Endothelial cell of umbilical vein (primary cell): ENCODE measurements at regions of chr13 and their contacts with region 1.

Region 1: DNA sequence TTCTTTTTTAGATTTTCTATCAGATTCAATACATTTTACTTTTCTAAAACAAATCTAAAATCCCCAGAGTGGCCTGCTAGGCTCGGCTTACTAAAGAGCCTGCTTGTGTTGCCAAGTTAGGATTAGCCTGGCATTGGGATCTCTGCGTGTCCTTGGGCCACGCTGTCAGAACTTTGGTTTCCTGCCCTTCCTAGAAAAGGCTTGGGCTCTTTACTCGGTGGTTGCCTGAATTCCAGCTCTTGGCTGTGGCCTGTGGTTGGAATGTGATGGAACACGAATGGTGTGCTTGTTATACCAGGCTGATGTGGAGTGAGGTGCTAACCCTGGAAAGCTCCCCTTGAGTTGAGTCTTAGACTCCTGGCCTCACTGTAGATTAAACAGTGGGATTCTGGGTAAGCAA is 8.5 kb downstream of the SPATA13 start:
- DNase-seq: no peak
- H3K4me3 ChIP-seq: no peak overlapping the region
- H3K27ac ChIP-seq: no peak overlapping the region
- H3K4me1 ChIP-seq: peaks cover 7% of the 10 kb centered on the region
- H3K27me3 ChIP-seq: no peaks in the 10 kb centered on the region
- CTCF ChIP-seq: no peak
- POLR2A ChIP-seq: no peak

Region 2: DNA sequence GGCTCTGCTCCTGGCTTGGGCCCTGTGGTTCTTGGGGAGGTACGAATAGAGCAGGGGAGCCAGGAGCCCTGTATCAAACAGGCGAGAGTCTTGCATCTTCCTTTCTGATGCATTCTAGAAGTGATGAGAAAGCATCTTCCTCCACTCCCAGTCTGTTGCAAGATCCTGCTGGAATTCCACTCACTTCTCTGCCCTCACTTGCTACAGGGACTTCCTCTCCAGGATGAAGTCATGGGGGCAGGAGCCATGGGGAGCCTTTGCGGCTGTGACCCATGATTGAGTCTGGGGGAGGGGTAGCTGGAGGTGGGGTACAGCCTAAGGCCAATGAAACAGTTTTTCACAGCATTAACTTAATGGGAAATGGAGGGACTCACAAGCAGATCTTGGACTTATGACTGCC is 43.0 kb before region 1 on chr13:
- CTCF ChIA-PET with region 1: no interaction called
- POLR2A ChIA-PET with region 1: no interaction called
- dilution Hi-C with region 1: no loop called
- intact Hi-C with region 1: loop called (anchors 1 kb)
- DNase-seq: no peak
- H3K4me3 ChIP-seq: no peak overlapping the region
- H3K27ac ChIP-seq: no peak overlapping the region
- H3K4me1 ChIP-seq: peaks cover 14% of the 10 kb centered on the region
- H3K27me3 ChIP-seq: peaks cover 0 to 11% of the 10 kb centered on the region in 2 experiments
- CTCF ChIP-seq: no peak
- POLR2A ChIP-seq: no peak

Region 3: GRCh38 chr13:24153979-24154701 is 14.8 kb before region 1 on chr13:
- CTCF ChIA-PET with region 1: no interaction called
- POLR2A ChIA-PET with region 1: no interaction called
- dilution Hi-C with region 1: no loop called
- intact Hi-C with region 1: no loop called
- DNase-seq: no peak
- H3K4me3 ChIP-seq: no peak overlapping the region
- H3K27ac ChIP-seq: no peak overlapping the region
- H3K4me1 ChIP-seq: peaks cover 7% of the 10 kb centered on the region
- H3K27me3 ChIP-seq: no peaks in the 10 kb centered on the region
- CTCF ChIP-seq: no peak
- POLR2A ChIP-seq: no peak

Region 4: GRCh38 chr13:24407844-24408243 is 238.9 kb after region 1 on chr13:
- CTCF ChIA-PET with region 1: no interaction called
- POLR2A ChIA-PET with region 1: no interaction called
- dilution Hi-C with region 1: no loop called
- intact Hi-C with region 1: no loop called
- DNase-seq: no peak
- H3K4me3 ChIP-seq: no peak overlapping the region
- H3K27ac ChIP-seq: no peak overlapping the region
- H3K4me1 ChIP-seq: no peaks in the 10 kb centered on the region
- H3K27me3 ChIP-seq: peaks cover 0 to 5% of the 10 kb centered on the region in 2 experiments
- CTCF ChIP-seq: no peak
- POLR2A ChIP-seq: no peak